Vagina (tissue), 2 donors: ENCODE measurements at regions of chr11 and their contacts with region 1.

Region 1: DNA sequence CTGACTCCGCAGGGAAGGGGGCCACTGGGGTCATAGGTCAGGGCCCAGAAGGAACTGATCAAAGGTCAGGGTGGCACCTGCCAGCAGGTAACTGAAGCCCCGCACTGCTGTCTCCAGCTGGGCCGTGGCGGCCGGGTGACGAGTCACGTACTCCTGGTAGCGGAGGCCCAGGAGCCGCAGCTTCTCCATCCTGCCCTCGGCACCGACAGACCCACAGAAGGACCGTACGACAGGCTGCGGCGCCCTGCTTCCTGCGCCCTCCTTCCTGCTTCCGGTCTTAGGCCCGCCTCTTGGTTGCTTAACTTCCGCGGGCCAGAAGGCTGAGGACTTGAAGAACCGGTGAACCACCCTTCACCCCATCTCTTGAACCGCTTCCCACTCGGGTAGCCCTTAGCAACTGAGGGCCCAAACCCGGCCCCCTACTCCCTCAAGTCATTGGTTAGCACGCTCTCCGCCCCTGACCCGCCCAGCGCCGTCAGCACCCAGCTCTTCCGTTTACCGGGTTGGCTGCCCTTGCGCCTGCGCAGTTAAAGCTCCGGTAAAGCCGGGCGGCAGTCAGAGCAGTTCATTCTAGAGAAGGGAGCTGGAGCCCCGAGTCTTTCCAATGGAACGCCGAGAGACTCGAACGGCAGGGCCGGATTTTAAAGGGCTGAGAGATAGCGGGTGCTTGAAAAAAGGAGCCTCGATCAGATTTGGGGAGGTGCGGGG is at the start of gene PEX16:
- DNase-seq: peak in 1 of 2 donors; percentile 99
- H3K4me3 ChIP-seq: peak within 1 kb of the TSS; percentile 73 to 96
- H3K27ac ChIP-seq: peak within 1 kb of the TSS; percentile 85
- H3K4me1 ChIP-seq: peaks cover 36% of the 10 kb centered on the region
- H3K27me3 ChIP-seq: peaks cover 6% of the 10 kb centered on the region
- CTCF ChIP-seq: no peak
- POLR2A ChIP-seq: peak; percentile 22 to 55
- total RNA-seq, gene PEX16: 35.8 TPM

Region 2: GRCh38 chr11:45846974-45847910 is 70.5 kb before region 1 on chr11 and contains the start of gene CRY2:
- intact Hi-C with region 1: loop called (anchors 5 kb)
- DNase-seq: peak; percentile 99 to 100
- H3K4me3 ChIP-seq: peak within 1 kb of the TSS; percentile 88 to 98
- H3K27ac ChIP-seq: peak within 1 kb of the TSS; percentile 84
- H3K4me1 ChIP-seq: peaks cover 51% of the 10 kb centered on the region
- H3K27me3 ChIP-seq: no peaks in the 10 kb centered on the region
- CTCF ChIP-seq: no peak
- POLR2A ChIP-seq: peak in 1 of 2 donors; percentile 95
- total RNA-seq, gene CRY2: 54.3 TPM

Region 3: GRCh38 chr11:45933131-45933831 is 15.5 kb after region 1 on chr11:
- intact Hi-C with region 1: no loop called
- DNase-seq: peak in 1 of 2 donors; percentile 86
- H3K4me3 ChIP-seq: peak overlapping the region in 1 of 2 donors; percentile 11
- H3K27ac ChIP-seq: no peak overlapping the region
- H3K4me1 ChIP-seq: peaks cover 32% of the 10 kb centered on the region
- H3K27me3 ChIP-seq: no peaks in the 10 kb centered on the region
- CTCF ChIP-seq: no peak
- POLR2A ChIP-seq: no peak

Region 4: DNA sequence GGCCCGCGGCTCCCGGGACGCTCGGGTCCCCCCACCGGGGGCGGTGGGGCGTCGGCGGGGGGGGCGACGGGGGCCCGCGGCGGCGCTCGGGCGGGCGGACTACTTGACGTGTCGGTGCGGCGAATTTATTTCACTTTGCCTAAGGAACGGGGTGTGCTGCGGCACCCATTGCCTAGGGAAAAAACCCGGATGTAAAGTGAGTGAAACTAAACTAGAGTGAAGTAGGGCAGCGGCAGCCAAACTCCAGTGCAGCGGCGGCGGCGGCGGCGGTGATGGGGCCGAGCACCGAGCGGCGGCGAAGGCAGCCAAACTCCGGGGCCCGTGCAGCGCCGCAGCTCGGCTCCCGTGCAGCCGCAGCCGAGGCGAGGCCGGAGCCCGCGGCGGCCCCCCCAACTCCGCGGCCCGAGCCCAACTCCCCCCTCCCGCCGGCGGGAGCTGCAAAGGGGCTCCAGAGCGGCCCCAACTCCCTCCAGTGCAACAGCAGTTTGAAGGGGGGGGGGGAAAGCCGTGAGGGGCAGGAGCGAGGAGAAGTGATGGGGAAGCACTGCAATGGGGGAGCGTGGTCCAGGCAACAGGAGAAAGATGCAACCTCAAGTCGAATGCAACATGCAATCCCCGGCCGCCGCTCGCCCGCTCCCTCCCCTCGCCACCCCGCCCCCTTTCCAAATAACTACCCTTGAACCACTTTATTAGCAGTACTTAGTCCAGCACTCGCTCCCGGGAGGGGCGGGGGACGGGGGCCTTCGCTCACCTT is 204.1 kb after region 1 on chr11:
- intact Hi-C with region 1: loop called (anchors 5 kb)
- DNase-seq: no peak
- H3K4me3 ChIP-seq: peak overlapping the region; percentile 67 to 89
- H3K27ac ChIP-seq: peak overlapping the region; percentile 97
- H3K4me1 ChIP-seq: peaks cover 21% of the 10 kb centered on the region
- H3K27me3 ChIP-seq: no peaks in the 10 kb centered on the region
- CTCF ChIP-seq: no peak
- POLR2A ChIP-seq: no peak